ENCODE measurements at regions of chr7 and their contacts with region 1.

Region 1: DNA sequence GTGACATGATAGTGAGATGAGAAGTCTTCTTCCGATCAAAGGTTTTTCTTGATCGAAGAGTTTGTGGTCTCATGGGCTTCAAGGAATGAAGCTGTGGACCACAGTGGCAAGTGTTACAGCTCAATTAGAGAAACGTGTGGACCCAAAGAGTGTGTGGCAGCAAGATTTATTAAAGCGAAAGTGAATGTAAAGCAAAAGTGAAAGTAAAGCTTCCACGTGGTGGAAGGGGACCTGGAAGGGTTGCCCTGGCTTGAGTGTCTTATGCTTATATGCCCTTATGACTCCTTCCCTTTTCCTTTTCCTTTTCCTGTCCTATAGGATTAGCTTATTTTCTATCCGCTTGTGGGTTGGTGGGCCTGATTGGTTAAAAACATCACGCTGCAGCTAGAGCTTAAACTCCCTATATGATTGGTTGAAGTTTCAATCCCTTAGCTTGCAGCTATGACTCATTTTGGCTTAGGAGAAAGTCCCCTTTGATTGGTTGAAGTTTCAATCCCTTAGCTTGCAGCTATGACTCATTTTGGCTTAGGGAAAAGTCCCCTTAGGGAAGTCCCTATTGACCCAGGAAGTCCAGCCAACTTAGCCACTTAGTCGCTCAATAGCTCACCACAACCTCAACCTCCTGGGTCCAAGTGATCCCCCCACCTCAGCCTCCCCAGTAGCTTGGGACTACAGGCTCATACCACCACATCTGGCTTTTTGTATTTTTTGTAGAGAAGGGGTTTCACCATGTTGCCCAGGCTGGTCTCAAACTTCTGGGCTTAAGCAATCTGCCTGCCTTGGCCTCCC is 34.7 kb downstream of the MRPS24 start:
- DNase-seq: peak in 2 of 7 donors; percentile 5 to 21
- H3K4me3 ChIP-seq: peak overlapping the region in 1 of 4 donors; percentile 30
- H3K27ac ChIP-seq: no peak overlapping the region
- H3K4me1 ChIP-seq: no peaks in the 10 kb centered on the region
- H3K27me3 ChIP-seq: peaks cover 4% of the 10 kb centered on the region
- CTCF ChIP-seq: no peak
- POLR2A ChIP-seq: no peak

Region 2: DNA sequence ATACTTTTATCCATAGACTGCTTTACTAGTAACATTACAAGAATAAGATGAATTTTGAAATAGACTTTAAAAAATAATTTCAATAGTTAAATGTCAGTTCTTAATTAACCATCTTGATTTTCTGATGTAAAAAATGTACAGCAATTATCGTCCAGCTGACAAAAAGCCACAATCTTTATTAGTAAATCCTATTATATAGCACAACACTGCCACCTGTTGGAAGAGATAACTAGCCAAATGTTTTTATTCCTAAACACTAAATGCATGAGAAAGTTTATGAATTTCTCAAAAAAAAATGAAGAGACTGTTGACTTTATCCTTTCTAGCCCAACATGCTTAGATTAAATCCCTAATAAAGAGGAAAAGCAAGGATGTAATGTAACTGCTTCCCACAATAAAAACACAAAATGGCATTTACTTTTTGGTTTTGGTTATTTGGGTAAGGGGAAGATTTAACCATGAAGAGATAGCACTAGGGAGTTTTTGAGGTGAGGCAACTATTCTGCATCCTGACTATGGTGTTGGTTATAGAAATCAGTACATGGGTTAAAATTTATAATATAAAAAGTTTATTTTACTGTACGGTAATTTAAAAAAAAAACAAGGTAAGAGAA is 113.4 kb before region 1 on chr7:
- intact Hi-C with region 1: loop called (anchors 5 to 10 kb)
- DNase-seq: no peak
- H3K4me3 ChIP-seq: no peak overlapping the region
- H3K27ac ChIP-seq: no peak overlapping the region
- H3K4me1 ChIP-seq: no peaks in the 10 kb centered on the region
- H3K27me3 ChIP-seq: no peaks in the 10 kb centered on the region
- CTCF ChIP-seq: peak; percentile 52 to 87 (median 72)
- POLR2A ChIP-seq: no peak

Region 3: DNA sequence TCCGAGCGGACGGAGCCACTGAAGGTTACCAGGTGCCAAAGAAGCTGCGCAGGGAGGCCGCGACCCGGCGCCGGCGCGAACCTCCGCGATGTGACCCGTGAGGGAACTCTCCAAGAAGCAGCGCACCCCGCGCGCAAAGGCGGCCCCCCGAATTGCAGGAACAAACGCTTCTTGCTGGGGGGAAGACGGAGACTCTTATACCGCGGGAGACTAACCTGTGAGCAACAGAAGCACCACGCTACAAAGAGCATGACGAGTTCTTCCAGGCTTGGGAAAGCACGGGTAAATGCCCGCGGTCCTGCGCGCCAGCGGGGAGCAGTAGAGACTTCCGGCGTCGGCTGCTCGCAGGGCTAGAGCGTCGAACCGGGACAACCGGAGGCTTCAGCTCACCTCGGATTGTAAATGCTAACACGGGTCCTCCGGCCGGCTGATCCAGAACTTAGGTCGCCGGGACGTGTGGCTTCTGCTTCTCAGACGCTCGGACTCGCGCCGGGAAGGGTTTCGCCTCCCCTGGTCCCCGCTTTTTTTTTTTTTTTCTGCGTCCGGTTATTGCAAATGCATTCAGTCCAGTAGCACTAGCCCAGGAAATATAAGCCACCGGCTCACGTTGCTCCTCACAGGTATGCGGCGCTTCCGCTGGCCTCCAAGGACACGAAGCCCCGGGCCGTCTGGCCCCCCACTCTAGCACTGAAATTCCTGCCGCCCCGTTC is 105.3 kb before region 1 on chr7 and contains the start of gene COA1:
- intact Hi-C with region 1: loop called (anchors 5 to 10 kb)
- DNase-seq: peak; percentile 83 to 92 (median 87)
- H3K4me3 ChIP-seq: peak within 1 kb of the TSS; percentile 88 to 94 (median 90)
- H3K27ac ChIP-seq: peak within 1 kb of the TSS; percentile 29 to 86 (median 79)
- H3K4me1 ChIP-seq: peaks cover 8 to 22% of the 10 kb centered on the region in 2 donors
- H3K27me3 ChIP-seq: no peaks in the 10 kb centered on the region
- CTCF ChIP-seq: peak in 4 of 6 experiments; percentile 13 to 25 (median 19)
- POLR2A ChIP-seq: peak in 1 of 2 donors; percentile 73
- total RNA-seq, gene COA1: 19.0 to 60.0 (median 40.4) TPM

Region 4: GRCh38 chr7:43791665-43792064 is 43.0 kb before region 1 on chr7:
- intact Hi-C with region 1: no loop called
- DNase-seq: peak in 2 of 7 donors; percentile 21 to 22
- H3K4me3 ChIP-seq: no peak overlapping the region
- H3K27ac ChIP-seq: no peak overlapping the region
- H3K4me1 ChIP-seq: no peaks in the 10 kb centered on the region
- H3K27me3 ChIP-seq: no peaks in the 10 kb centered on the region
- CTCF ChIP-seq: no peak
- POLR2A ChIP-seq: no peak

Region 5: DNA sequence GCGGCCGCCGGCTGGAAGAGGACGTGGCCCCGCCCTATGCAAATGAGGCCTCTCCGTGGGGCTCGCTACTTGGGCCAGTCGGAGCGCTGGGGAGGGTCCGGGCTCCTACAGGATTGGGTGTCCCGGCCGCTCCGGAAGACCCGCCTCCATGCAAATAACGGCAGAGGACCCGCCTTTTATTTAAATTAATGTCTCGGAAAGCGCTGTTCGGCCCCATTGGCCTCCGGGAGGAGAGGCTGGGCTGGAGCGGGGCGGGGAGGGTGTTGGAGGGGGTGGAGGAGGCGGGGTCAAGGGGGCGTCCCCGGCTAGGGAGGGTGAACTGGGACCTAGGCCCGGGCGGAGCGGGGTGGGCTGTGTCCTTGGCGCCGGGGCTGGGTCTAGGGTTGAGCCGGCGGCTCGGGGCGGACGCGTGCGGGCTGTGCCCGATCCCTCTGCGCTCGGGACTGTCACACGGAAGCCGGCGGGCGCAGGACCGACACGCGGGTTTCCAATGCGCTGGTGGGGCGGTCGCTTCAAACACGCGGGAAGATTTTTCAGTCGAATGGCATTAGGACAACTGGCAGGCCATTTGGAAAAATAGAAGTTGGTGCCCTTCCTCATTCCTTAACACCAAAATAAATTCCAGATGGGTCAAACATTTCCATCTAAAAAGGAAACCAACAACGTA is 248.0 kb after region 1 on chr7:
- intact Hi-C with region 1: no loop called
- DNase-seq: peak; percentile 98 to 100 (median 99)
- H3K4me3 ChIP-seq: peak overlapping the region in 3 of 4 donors; percentile 7 to 96 (median 87)
- H3K27ac ChIP-seq: peak overlapping the region in 4 of 5 donors; percentile 73 to 95 (median 86)
- H3K4me1 ChIP-seq: peaks cover 11 to 13% of the 10 kb centered on the region in 2 donors
- H3K27me3 ChIP-seq: no peaks in the 10 kb centered on the region
- CTCF ChIP-seq: no peak
- POLR2A ChIP-seq: peak in 1 of 2 donors; percentile 43

Region 6: DNA sequence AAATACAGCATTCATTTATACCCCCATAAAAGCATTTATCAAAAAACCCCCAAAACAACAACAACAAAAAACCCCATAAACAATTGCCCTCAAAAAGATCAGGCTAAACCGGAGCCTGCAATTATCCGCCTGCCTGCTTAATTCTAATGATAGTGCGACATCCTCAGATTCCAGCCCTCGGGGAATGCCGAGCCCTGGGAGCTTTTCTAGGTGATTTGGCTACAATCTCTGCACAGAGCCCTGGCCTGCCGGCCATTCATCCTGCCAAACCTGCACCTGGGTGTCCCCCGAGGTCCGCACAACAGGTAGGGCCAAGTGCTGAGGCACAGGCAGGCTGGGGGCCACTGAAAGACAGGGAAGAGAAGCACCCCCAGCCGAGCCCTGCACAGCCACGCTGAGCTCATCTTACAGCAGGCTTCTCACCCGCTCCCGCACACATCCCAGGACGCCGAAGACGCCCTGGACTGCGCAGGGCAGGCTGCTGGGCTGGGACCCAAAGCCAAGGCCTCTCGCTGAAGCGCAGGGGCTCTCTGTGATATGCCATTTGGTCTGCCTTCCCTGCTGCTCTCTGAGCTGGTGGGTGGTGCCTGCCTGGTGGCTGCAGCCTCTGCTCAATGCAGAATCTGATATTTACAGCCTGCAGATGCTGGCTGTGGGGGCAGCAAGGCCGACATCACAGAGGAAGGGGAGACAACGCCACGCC is 433.2 kb after region 1 on chr7:
- intact Hi-C with region 1: no loop called
- DNase-seq: no peak
- H3K4me3 ChIP-seq: no peak overlapping the region
- H3K27ac ChIP-seq: peak overlapping the region in 1 of 5 donors; percentile 26
- H3K4me1 ChIP-seq: no peaks in the 10 kb centered on the region
- H3K27me3 ChIP-seq: no peaks in the 10 kb centered on the region
- CTCF ChIP-seq: no peak
- POLR2A ChIP-seq: no peak

Region 7: GRCh38 chr7:45007571-45008328 is 1173.1 kb after region 1 on chr7:
- intact Hi-C with region 1: no loop called
- DNase-seq: no peak
- H3K4me3 ChIP-seq: no peak overlapping the region
- H3K27ac ChIP-seq: no peak overlapping the region
- H3K4me1 ChIP-seq: peaks cover 7 to 11% of the 10 kb centered on the region in 2 donors
- H3K27me3 ChIP-seq: no peaks in the 10 kb centered on the region
- CTCF ChIP-seq: no peak
- POLR2A ChIP-seq: no peak